HCT116 (cell line): ENCODE measurements at regions of chr17 and their contacts with region 1.

Region 1: GRCh38 chr17:75238684-75239191 is 22.7 kb downstream of the GGA3 start:
- DNase-seq: peak; percentile 59
- ATAC-seq: peak; percentile 79
- H3K4me3 ChIP-seq: no peak overlapping the region
- H3K27ac ChIP-seq: no peak overlapping the region; the same call in 1 of the 2 replicates
- H3K4me1 ChIP-seq: peaks cover 0 to 11% of the 10 kb centered on the region in 2 experiments; a peak in 1 of 4 replicates
- H3K27me3 ChIP-seq: no peaks in the 10 kb centered on the region
- CTCF ChIP-seq: peak; percentile 77 to 99 (median 99)
- POLR2A ChIP-seq: no peak
- RAD21 ChIP-seq: peak; percentile 68

Region 2: GRCh38 chr17:75250009-75250471 is 11.3 kb after region 1 on chr17:
- CTCF ChIA-PET with region 1: interaction called, 12 read pairs
- POLR2A ChIA-PET with region 1: no interaction called
- RAD21 ChIA-PET with region 1: no interaction called
- intact Hi-C with region 1: no loop called
- DNase-seq: no peak
- ATAC-seq: peak; percentile 52; the same call in 1 of the 2 replicates
- H3K4me3 ChIP-seq: no peak overlapping the region
- H3K27ac ChIP-seq: no peak overlapping the region
- H3K4me1 ChIP-seq: peaks cover 6 to 33% of the 10 kb centered on the region in 2 experiments; a peak in 3 of 4 replicates
- H3K27me3 ChIP-seq: no peaks in the 10 kb centered on the region
- CTCF ChIP-seq: no peak
- POLR2A ChIP-seq: no peak
- RAD21 ChIP-seq: no peak

Region 3: GRCh38 chr17:75261336-75262111 is 22.8 kb after region 1 on chr17 and contains the starts of genes GGA3 and MRPS7:
- CTCF ChIA-PET with region 1: interaction called, 16 read pairs
- POLR2A ChIA-PET with region 1: interaction called, 3 read pairs
- RAD21 ChIA-PET with region 1: no interaction called
- intact Hi-C with region 1: no loop called
- DNase-seq: peak; percentile 89
- ATAC-seq: peak; percentile 95
- H3K4me3 ChIP-seq: peak within 1 kb of the TSS; percentile 83 to 97
- H3K27ac ChIP-seq: peak within 1 kb of the TSS; percentile 80
- H3K4me1 ChIP-seq: peaks cover 17 to 21% of the 10 kb centered on the region in 2 experiments
- H3K27me3 ChIP-seq: no peaks in the 10 kb centered on the region
- CTCF ChIP-seq: no peak
- POLR2A ChIP-seq: no peak
- RAD21 ChIP-seq: no peak; the same call in 1 of the 2 replicates
- total RNA-seq, gene GGA3: 58.3 TPM
- total RNA-seq, gene MRPS7: 104 TPM

Region 4: DNA sequence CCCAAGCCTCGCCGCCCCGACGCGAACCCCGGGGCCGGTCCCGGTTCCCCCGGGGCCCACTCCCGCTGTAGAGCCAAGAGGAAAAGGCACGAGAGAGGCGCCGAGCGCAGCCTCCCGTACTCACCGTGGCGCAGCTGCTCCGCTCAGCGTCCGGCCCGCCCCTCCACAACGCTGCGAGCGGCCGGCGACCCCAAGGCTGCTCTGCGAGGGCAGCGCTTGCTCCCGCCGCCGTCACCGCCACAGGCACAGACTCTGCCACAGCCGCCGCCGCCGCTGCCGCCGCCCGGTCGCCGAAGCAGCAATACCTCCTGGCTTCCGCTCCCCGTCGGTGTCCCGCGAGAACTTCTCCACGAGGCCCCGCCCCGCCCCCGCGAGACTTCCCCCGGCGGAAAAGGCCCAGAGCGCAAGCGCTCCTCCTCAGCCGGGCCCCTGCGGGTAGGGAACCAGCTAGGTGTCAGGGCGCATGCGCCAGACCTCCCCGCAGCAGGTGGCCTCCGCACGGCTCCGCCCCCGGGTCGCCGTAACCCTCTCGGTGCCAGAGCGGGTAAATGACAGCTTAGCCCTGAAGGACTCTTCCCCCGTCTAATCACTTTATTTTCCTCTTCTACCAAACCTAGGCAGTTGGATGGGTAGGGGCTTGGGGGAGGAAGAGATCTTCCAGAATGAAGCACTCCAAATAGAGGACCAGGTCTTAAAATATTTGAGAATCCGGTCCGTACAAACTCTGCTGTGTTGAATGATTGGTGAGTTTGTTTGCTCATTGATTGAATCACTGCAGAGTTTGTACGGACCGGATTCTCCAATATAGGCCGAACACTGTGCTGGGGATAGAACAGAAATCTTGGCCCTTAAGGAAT is 166.9 kb after region 1 on chr17 and contains the start of gene GRB2:
- CTCF ChIA-PET with region 1: interaction called, 8 read pairs
- POLR2A ChIA-PET with region 1: no interaction called
- RAD21 ChIA-PET with region 1: no interaction called
- intact Hi-C with region 1: loop called (anchors 2 kb)
- DNase-seq: peak; percentile 94
- ATAC-seq: peak; percentile 92
- H3K4me3 ChIP-seq: peak within 1 kb of the TSS; percentile 97
- H3K27ac ChIP-seq: peak within 1 kb of the TSS; percentile 87
- H3K4me1 ChIP-seq: peaks cover 5 to 19% of the 10 kb centered on the region in 2 experiments
- H3K27me3 ChIP-seq: no peaks in the 10 kb centered on the region
- CTCF ChIP-seq: no peak
- POLR2A ChIP-seq: peak; percentile 68
- RAD21 ChIP-seq: no peak
- total RNA-seq, gene GRB2: 146 TPM

Region 5: DNA sequence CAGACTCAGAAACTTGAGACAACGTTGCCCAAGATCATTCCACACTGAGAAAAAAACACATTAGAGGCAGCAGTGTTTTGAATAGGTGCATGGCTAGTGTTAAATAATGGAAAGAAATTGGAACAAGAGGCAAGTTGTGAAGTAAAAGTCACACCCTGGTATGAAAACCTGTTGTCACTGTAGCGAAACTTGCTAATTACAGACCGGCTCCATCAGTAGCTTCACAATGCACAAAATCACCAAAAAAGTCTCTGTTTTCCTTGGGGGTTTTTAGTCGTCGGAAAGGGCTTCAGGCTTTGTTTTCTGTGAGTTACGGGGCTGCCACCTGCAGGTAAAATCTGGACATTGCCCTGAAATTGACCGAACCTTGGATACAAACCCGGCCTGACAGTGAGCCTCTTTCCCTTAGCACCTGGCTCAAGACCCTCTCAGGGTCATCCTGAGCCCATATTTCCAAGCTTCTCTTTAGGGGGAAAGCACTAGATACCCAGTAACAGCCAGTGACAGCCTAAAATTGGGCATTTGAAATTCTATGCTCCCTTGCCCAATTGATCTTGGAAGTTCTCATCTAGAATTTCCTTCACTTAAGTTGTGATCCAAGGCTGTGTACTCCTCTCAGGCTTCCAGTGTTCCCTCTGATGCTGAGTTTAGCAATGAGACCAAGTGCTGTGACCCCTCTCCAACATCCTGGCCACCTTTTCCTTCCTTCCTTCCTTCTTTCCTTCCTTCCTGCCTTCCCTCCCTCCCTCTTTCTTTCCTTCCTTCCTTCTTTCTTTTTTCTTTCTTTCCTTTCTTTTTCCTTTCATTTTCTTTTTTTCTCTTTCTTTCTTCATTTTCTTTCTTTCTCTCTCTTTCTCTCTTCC is 173.9 kb after region 1 on chr17:
- CTCF ChIA-PET with region 1: interaction called, 13 read pairs
- POLR2A ChIA-PET with region 1: no interaction called
- RAD21 ChIA-PET with region 1: no interaction called
- intact Hi-C with region 1: loop called (anchors 1 kb)
- DNase-seq: peak; percentile 75
- ATAC-seq: peak; percentile 93
- H3K4me3 ChIP-seq: peak overlapping the region; percentile 12 to 17; a peak in 2 of 4 replicates
- H3K27ac ChIP-seq: no peak overlapping the region
- H3K4me1 ChIP-seq: peaks cover 0 to 11% of the 10 kb centered on the region in 2 experiments; a peak in 2 of 4 replicates
- H3K27me3 ChIP-seq: peaks cover 5% of the 10 kb centered on the region; the same call in 1 of the 2 replicates
- CTCF ChIP-seq: peak; percentile 91 to 96 (median 91)
- POLR2A ChIP-seq: no peak
- RAD21 ChIP-seq: peak; percentile 99